PC-9 (cell line): ENCODE measurements at regions of chr11 and their contacts with region 1.

Region 1: GRCh38 chr11:29005401-29005980 is 897.3 kb downstream of the METTL15 start:
- DNase-seq: no peak
- H3K4me3 ChIP-seq: no peak overlapping the region
- H3K27ac ChIP-seq: no peak overlapping the region
- H3K4me1 ChIP-seq: no peaks in the 10 kb centered on the region
- H3K27me3 ChIP-seq: no peaks in the 10 kb centered on the region
- CTCF ChIP-seq: no peak

Region 2: DNA sequence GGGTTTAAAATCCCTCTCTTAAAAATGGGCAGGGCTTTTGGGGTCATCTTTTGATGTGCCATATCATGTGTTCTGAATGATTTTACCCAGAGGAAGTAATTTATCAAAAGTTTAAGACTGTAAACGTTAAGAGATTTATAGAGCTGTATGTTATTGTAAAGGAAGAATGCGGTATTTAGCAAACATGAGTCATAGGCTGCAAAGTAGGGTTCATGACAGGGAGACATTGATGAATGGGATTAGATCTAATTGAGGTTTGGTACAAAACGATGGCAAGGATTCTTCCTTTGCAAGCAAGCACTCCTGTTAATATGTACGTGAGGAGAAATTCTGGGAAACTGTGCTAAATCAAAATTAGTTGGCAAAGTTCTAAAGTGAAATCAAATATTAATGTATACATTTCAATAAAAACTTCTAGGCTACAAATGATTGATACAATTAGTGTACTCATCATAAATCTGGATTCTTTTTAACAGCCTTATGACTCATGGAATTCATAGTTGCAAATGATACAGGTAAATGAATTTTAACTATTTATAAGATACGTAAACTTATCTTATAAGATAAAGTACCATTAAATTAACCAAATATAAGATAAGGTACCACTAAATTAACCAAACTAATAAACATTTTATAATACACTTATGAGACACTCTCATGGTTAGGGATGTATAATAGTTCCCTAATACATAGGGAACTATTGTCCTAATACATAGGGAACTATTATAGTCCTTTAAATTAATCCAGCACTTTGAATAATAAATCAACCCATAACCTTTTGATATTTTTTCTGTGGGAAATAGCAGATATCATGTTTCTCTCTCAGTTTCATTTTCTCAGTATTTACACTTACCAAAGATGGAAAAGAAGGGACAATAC is 955.9 kb before region 1 on chr11:
- CTCF ChIA-PET with region 1: no interaction called
- POLR2A ChIA-PET with region 1: no interaction called
- intact Hi-C with region 1: loop called (anchors 10 kb)
- DNase-seq: peak in 1 of 2 experiments; percentile 66
- H3K4me3 ChIP-seq: no peak overlapping the region
- H3K27ac ChIP-seq: no peak overlapping the region
- H3K4me1 ChIP-seq: peaks cover 13% of the 10 kb centered on the region
- H3K27me3 ChIP-seq: no peaks in the 10 kb centered on the region
- CTCF ChIP-seq: no peak

Region 3: DNA sequence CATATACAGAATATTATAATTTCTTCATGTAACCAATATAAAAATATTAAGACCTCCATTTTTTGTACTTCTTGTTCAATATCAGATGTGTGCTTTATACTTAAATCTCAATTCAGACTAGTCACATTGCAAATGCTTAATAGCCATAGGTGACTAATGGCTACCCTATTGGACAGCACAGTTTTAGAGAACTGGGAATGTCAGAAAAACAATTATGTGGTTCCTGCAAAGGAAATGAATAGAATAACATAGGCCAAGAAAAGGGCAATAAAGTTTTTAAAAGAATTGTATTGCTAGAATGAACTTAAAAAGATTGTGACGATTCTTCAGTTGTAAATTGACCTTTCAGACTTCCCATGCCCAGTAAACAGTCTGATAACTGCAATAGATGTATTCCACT is 54.3 kb before region 1 on chr11:
- CTCF ChIA-PET with region 1: no interaction called
- POLR2A ChIA-PET with region 1: no interaction called
- intact Hi-C with region 1: no loop called
- DNase-seq: no peak
- H3K4me3 ChIP-seq: no peak overlapping the region
- H3K27ac ChIP-seq: no peak overlapping the region
- H3K4me1 ChIP-seq: no peaks in the 10 kb centered on the region
- H3K27me3 ChIP-seq: no peaks in the 10 kb centered on the region
- CTCF ChIP-seq: no peak

Region 4: GRCh38 chr11:29343465-29344333 is 338.2 kb after region 1 on chr11:
- CTCF ChIA-PET with region 1: no interaction called
- POLR2A ChIA-PET with region 1: no interaction called
- intact Hi-C with region 1: no loop called
- DNase-seq: peak in 1 of 2 experiments; percentile 70
- H3K4me3 ChIP-seq: no peak overlapping the region
- H3K27ac ChIP-seq: no peak overlapping the region
- H3K4me1 ChIP-seq: no peaks in the 10 kb centered on the region
- H3K27me3 ChIP-seq: no peaks in the 10 kb centered on the region
- CTCF ChIP-seq: peak; percentile 93